Mammary epithelial cell (primary cell): ENCODE measurements at regions of chr1 and their contacts with region 1.

Region 1: GRCh38 chr1:152182431-152182830 is 23.4 kb upstream of the RPTN start:
- DNase-seq: no peak
- H3K4me3 ChIP-seq: no peak overlapping the region
- H3K27ac ChIP-seq: peak overlapping the region; percentile 72
- H3K4me1 ChIP-seq: peaks cover 59% of the 10 kb centered on the region
- H3K27me3 ChIP-seq: no peaks in the 10 kb centered on the region
- CTCF ChIP-seq: peak; percentile 84 to 87

Region 2: DNA sequence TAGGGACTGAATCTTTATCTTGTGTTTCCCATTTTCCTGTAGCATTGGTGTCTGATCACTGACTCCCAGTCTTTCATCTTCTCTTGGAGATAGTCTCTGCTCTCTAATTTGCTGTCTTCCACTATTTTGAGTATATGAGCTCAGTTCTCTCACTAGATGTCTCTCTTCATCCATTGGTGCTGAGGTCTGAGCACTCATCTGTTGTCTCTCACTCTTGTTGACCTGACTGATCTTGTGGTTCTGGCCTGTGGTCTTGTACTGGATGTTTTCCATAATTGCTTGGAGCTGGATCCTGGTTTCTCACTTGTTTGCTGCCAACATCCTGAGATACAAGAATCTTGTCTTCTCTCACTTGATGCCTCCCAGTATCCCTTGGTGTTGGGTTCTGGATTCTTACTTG is 120.5 kb before region 1 on chr1:
- CTCF ChIA-PET with region 1: no interaction called
- dilution Hi-C with region 1: no loop called
- in situ Hi-C with region 1: loop called in 1 of 2 experiments (anchors 5 kb)
- intact Hi-C with region 1: no loop called
- DNase-seq: no peak
- H3K4me3 ChIP-seq: no peak overlapping the region
- H3K27ac ChIP-seq: no peak overlapping the region
- H3K4me1 ChIP-seq: no peaks in the 10 kb centered on the region
- H3K27me3 ChIP-seq: peaks cover 4% of the 10 kb centered on the region
- CTCF ChIP-seq: no peak

Region 3: DNA sequence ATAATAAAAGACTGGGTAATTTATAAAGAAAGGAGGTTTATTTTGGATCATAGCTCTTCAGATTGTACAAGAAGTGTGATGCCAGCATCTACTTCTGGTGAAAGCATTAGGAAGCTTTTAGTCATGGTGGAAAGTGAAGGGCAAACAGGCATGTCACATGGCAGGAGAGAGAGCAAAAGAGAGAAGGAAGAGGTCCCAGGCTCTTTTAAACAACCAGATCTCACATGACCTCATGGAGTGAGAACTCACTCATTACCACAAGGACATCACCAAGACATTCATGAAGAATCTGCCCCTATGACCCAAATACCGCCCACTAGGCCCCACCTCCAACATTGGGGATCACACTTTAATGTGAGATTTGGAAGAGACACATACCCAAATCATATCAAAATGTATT is 33.5 kb before region 1 on chr1:
- CTCF ChIA-PET with region 1: no interaction called
- dilution Hi-C with region 1: no loop called
- in situ Hi-C with region 1: loop called (anchors 5 kb)
- intact Hi-C with region 1: no loop called
- DNase-seq: no peak
- H3K4me3 ChIP-seq: no peak overlapping the region
- H3K27ac ChIP-seq: no peak overlapping the region
- H3K4me1 ChIP-seq: no peaks in the 10 kb centered on the region
- H3K27me3 ChIP-seq: no peaks in the 10 kb centered on the region
- CTCF ChIP-seq: no peak

Region 4: GRCh38 chr1:152167835-152168519 is 14.5 kb before region 1 on chr1:
- CTCF ChIA-PET with region 1: no interaction called
- dilution Hi-C with region 1: no loop called
- in situ Hi-C with region 1: no loop called
- intact Hi-C with region 1: loop called (anchors 1 kb)
- DNase-seq: peak; percentile 99
- H3K4me3 ChIP-seq: no peak overlapping the region
- H3K27ac ChIP-seq: peak overlapping the region; percentile 68
- H3K4me1 ChIP-seq: peaks cover 42% of the 10 kb centered on the region
- H3K27me3 ChIP-seq: no peaks in the 10 kb centered on the region
- CTCF ChIP-seq: no peak